HepG2 (cell line): ENCODE measurements at regions of chr19 and their contacts with region 1.

Region 1: GRCh38 chr19:39428283-39429112 is 7.3 kb downstream of the RPS16 start:
- DNase-seq: peak; percentile 66
- ATAC-seq: peak; percentile 80
- H3K4me3 ChIP-seq: peak overlapping the region; percentile 33 to 72 (median 52)
- H3K27ac ChIP-seq: peak overlapping the region; percentile 62
- H3K4me1 ChIP-seq: peaks cover 52% of the 10 kb centered on the region
- H3K27me3 ChIP-seq: no peaks in the 10 kb centered on the region
- CTCF ChIP-seq: no peak
- EP300 ChIP-seq: no peak
- POLR2A ChIP-seq: no peak
- RAD21 ChIP-seq: no peak

Region 2: GRCh38 chr19:39363901-39364457 is 64.5 kb before region 1 on chr19:
- CTCF ChIA-PET with region 1: no interaction called
- POLR2A ChIA-PET with region 1: no interaction called
- in situ Hi-C with region 1: no loop called
- intact Hi-C with region 1: no loop called
- DNase-seq: no peak
- ATAC-seq: no peak
- H3K4me3 ChIP-seq: no peak overlapping the region
- H3K27ac ChIP-seq: no peak overlapping the region
- H3K4me1 ChIP-seq: no peaks in the 10 kb centered on the region
- H3K27me3 ChIP-seq: no peaks in the 10 kb centered on the region
- CTCF ChIP-seq: no peak
- EP300 ChIP-seq: no peak
- POLR2A ChIP-seq: no peak
- RAD21 ChIP-seq: no peak

Region 3: GRCh38 chr19:39390755-39391592 is 37.5 kb before region 1 on chr19 and contains the starts of genes MED29 and PAF1:
- CTCF ChIA-PET with region 1: no interaction called
- POLR2A ChIA-PET with region 1: interaction called, 16 read pairs
- in situ Hi-C with region 1: no loop called
- intact Hi-C with region 1: no loop called
- DNase-seq: peak; percentile 99
- ATAC-seq: peak; percentile 96
- H3K4me3 ChIP-seq: peak within 1 kb of the TSS; percentile 92 to 96 (median 95)
- H3K27ac ChIP-seq: peak within 1 kb of the TSS; percentile 86
- H3K4me1 ChIP-seq: peaks cover 22% of the 10 kb centered on the region
- H3K27me3 ChIP-seq: no peaks in the 10 kb centered on the region
- CTCF ChIP-seq: peak; percentile 57
- EP300 ChIP-seq: no peak
- POLR2A ChIP-seq: peak; percentile 98
- RAD21 ChIP-seq: 0 out of 2 replicates have a peak, but pooled peaks have one; percentile 16
- total RNA-seq, gene MED29: 14.0 and 18.1 TPM in 2 replicates
- total RNA-seq, gene PAF1: 30.2 and 31.0 TPM in 2 replicates

Region 4: GRCh38 chr19:39397360-39398296 is 30.9 kb before region 1 on chr19:
- CTCF ChIA-PET with region 1: no interaction called
- POLR2A ChIA-PET with region 1: interaction called, 17 read pairs
- in situ Hi-C with region 1: no loop called
- intact Hi-C with region 1: no loop called
- DNase-seq: peak; percentile 95
- ATAC-seq: peak; percentile 72
- H3K4me3 ChIP-seq: peak overlapping the region; percentile 29 to 57 (median 34)
- H3K27ac ChIP-seq: peak overlapping the region; percentile 98
- H3K4me1 ChIP-seq: peaks cover 59% of the 10 kb centered on the region
- H3K27me3 ChIP-seq: no peaks in the 10 kb centered on the region
- CTCF ChIP-seq: peak; percentile 100
- EP300 ChIP-seq: peak; percentile 45 to 66; a peak in 3 of 4 replicates
- POLR2A ChIP-seq: peak; percentile 89 to 95
- RAD21 ChIP-seq: peak; percentile 100

Region 5: DNA sequence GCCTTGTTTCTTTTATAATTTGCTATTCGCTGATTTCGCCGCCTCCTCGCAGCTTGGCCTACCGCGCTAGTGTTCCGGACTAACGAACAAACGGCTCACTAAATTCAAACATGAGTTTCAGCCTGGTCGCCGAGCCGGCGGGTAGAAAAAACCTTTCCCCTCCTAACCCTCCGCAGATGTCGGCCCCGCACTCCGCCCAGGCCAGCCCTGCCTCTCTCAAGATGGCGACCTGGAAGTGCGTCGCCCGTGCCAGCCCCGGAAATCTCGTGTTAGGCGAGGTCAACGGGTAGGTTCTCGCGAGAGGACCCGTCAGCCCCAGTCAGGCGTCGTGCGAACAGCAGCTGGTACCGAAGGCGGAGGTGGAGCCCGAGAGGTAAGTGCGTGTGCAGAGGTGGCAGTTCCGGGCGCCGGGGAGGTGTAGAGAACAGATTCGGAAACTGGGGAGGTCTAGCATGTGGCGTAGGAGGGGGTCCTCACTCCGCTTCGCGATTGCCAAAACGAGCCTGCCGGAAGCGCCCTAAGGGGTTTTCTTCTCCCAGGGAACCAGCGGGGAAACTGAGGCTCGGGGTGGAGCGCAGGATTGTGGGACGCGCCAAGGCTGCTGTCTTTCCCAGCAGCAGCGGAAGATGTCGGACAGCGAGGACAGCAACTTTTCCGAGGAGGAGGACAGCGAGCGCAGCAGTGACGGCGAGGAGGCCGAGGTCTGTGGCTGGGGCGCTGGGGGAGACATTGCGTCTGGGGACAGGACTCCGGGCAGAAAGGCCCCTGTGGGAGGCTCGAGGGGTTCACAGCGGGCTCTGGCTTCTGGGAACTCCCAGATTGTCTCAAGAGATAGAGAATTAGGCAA is 17.0 kb after region 1 on chr19 and contains the start of gene SUPT5H:
- CTCF ChIA-PET with region 1: no interaction called
- POLR2A ChIA-PET with region 1: interaction called, 25 read pairs
- in situ Hi-C with region 1: no loop called
- intact Hi-C with region 1: no loop called
- DNase-seq: peak; percentile 95
- ATAC-seq: peak; percentile 96
- H3K4me3 ChIP-seq: peak within 1 kb of the TSS; percentile 81 to 98 (median 94)
- H3K27ac ChIP-seq: peak within 1 kb of the TSS; percentile 91
- H3K4me1 ChIP-seq: peaks cover 47% of the 10 kb centered on the region
- H3K27me3 ChIP-seq: peaks cover 0 to 3% of the 10 kb centered on the region in 2 experiments; a peak in 2 of 5 replicates
- CTCF ChIP-seq: no peak
- EP300 ChIP-seq: no peak
- POLR2A ChIP-seq: peak; percentile 77 to 92
- RAD21 ChIP-seq: 0 out of 2 replicates have a peak, but pooled peaks have one; percentile 5
- total RNA-seq, gene SUPT5H: 34.9 and 48.2 TPM in 2 replicates

Region 6: DNA sequence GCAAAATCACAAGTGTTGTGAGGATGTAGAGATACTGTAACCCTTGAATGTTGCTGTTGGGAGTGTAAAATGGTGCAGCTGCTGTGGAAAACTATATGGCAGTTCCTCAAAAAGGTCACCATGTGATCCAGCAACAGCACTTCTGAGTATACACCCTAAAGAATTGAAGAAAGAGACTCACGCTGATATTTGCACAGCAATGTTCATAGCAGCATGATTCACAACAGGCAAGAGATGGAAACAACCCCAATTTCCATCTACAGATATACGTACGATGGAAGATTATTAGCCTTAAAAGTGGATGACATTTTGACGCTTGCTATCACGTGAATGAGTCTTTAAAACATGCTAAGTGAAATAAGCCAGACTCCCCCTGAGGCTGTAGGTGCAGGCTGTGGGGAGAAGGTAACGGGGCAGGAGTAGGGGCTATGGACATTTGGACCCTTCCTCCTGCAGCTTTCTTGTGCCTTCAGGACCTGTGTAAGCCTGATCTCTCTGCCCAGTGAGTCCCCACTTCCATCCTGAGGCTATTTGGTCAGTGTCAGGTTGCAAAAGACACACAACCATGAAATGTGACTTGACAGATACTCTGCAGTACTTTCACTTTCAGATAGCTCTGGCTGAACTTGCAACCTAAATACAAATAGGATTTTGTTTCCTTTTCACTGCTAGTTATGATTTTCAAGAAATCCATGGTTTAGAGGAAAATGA is 129.1 kb after region 1 on chr19:
- CTCF ChIA-PET with region 1: no interaction called
- POLR2A ChIA-PET with region 1: no interaction called
- in situ Hi-C with region 1: no loop called
- intact Hi-C with region 1: no loop called
- DNase-seq: peak; percentile 58
- ATAC-seq: peak; percentile 98
- H3K4me3 ChIP-seq: peak overlapping the region in 2 of 3 experiments; percentile 43 to 53; a peak in 4 of 6 replicates
- H3K27ac ChIP-seq: no peak overlapping the region
- H3K4me1 ChIP-seq: peaks cover 26% of the 10 kb centered on the region
- H3K27me3 ChIP-seq: no peaks in the 10 kb centered on the region
- CTCF ChIP-seq: no peak
- EP300 ChIP-seq: no peak
- POLR2A ChIP-seq: no peak
- RAD21 ChIP-seq: no peak

Region 7: DNA sequence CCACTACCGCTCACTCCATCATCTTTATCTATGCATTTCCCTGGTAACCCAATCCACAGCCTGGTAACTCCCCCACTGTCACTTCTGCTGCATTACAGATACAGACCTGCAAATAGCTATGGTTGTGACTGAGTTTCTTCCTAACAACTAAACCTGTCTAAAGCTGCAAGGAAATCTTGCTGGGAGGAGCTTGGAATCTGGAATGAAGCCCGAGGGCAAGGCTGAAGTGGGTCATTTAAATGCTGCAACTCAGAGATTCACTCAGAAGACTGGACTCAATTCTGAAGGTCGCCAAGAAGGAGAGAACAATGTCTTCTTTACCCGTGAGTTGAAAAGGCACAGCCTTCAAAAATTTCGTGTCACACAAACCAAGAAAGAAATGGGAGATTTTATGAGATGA is 173.8 kb after region 1 on chr19 and contains the start of gene LGALS13:
- CTCF ChIA-PET with region 1: no interaction called
- POLR2A ChIA-PET with region 1: no interaction called
- in situ Hi-C with region 1: no loop called
- intact Hi-C with region 1: no loop called
- DNase-seq: no peak
- ATAC-seq: no peak
- H3K4me3 ChIP-seq: no peak within 1 kb of the TSS
- H3K27ac ChIP-seq: no peak within 1 kb of the TSS
- H3K4me1 ChIP-seq: no peaks in the 10 kb centered on the region
- H3K27me3 ChIP-seq: peaks cover 2 to 13% of the 10 kb centered on the region in 2 experiments
- CTCF ChIP-seq: no peak
- EP300 ChIP-seq: no peak
- POLR2A ChIP-seq: no peak
- RAD21 ChIP-seq: no peak
- total RNA-seq, gene LGALS13: not detected in 2 replicates